CD14-positive monocyte (primary cell): ENCODE measurements at regions of chr1 and their contacts with region 1.

Region 1: GRCh38 chr1:180863158-180863775 is 49.4 kb upstream of the KIAA1614 start:
- DNase-seq: peak; percentile 7 to 47 (median 26)
- H3K4me3 ChIP-seq: no peak overlapping the region
- H3K4me3 Mint-ChIP-seq: no peak overlapping the region
- H3K27ac ChIP-seq: no peak overlapping the region
- H3K27ac Mint-ChIP-seq: no peak overlapping the region
- H3K4me1 ChIP-seq: peaks cover 2 to 11% of the 10 kb centered on the region in 2 donors
- H3K4me1 Mint-ChIP-seq: peaks cover 11% of the 10 kb centered on the region
- H3K27me3 ChIP-seq: no peaks in the 10 kb centered on the region
- H3K27me3 Mint-ChIP-seq: peaks cover 0 to 2% (median 0%) of the 10 kb centered on the region in 3 donors
- CTCF ChIP-seq: peak; percentile 90

Region 2: GRCh38 chr1:180515864-180516388 is 347.3 kb before region 1 on chr1:
- intact Hi-C with region 1: loop called (anchors 5 kb)
- DNase-seq: peak; percentile 48 to 67 (median 58)
- H3K4me3 ChIP-seq: no peak overlapping the region
- H3K4me3 Mint-ChIP-seq: no peak overlapping the region
- H3K27ac ChIP-seq: no peak overlapping the region
- H3K27ac Mint-ChIP-seq: no peak overlapping the region
- H3K4me1 ChIP-seq: no peaks in the 10 kb centered on the region
- H3K4me1 Mint-ChIP-seq: no peaks in the 10 kb centered on the region
- H3K27me3 ChIP-seq: no peaks in the 10 kb centered on the region
- H3K27me3 Mint-ChIP-seq: peaks cover 0 to 5% (median 4%) of the 10 kb centered on the region in 3 donors
- CTCF ChIP-seq: peak; percentile 87

Region 3: GRCh38 chr1:180521474-180522207 is 341.6 kb before region 1 on chr1:
- intact Hi-C with region 1: loop called (anchors 5 kb)
- DNase-seq: no peak
- H3K4me3 ChIP-seq: no peak overlapping the region
- H3K4me3 Mint-ChIP-seq: no peak overlapping the region
- H3K27ac ChIP-seq: no peak overlapping the region
- H3K27ac Mint-ChIP-seq: no peak overlapping the region
- H3K4me1 ChIP-seq: peaks cover 5 to 8% of the 10 kb centered on the region in 2 donors
- H3K4me1 Mint-ChIP-seq: peaks cover 10% of the 10 kb centered on the region
- H3K27me3 ChIP-seq: no peaks in the 10 kb centered on the region
- H3K27me3 Mint-ChIP-seq: peaks cover 0 to 2% (median 1%) of the 10 kb centered on the region in 3 donors
- CTCF ChIP-seq: no peak

Region 4: GRCh38 chr1:180533266-180533987 is 329.8 kb before region 1 on chr1:
- intact Hi-C with region 1: loop called in 1 of 2 experiments (anchors 5 kb)
- DNase-seq: peak; percentile 42 to 49 (median 47)
- H3K4me3 ChIP-seq: no peak overlapping the region
- H3K4me3 Mint-ChIP-seq: no peak overlapping the region
- H3K27ac ChIP-seq: no peak overlapping the region
- H3K27ac Mint-ChIP-seq: no peak overlapping the region
- H3K4me1 ChIP-seq: no peaks in the 10 kb centered on the region
- H3K4me1 Mint-ChIP-seq: no peaks in the 10 kb centered on the region
- H3K27me3 ChIP-seq: no peaks in the 10 kb centered on the region
- H3K27me3 Mint-ChIP-seq: peaks cover 0 to 4% (median 0%) of the 10 kb centered on the region in 3 donors
- CTCF ChIP-seq: peak; percentile 80

Region 5: GRCh38 chr1:180751921-180752320 is 111.3 kb before region 1 on chr1:
- intact Hi-C with region 1: no loop called
- DNase-seq: no peak
- H3K4me3 ChIP-seq: no peak overlapping the region
- H3K4me3 Mint-ChIP-seq: no peak overlapping the region
- H3K27ac ChIP-seq: no peak overlapping the region
- H3K27ac Mint-ChIP-seq: no peak overlapping the region
- H3K4me1 ChIP-seq: no peaks in the 10 kb centered on the region
- H3K4me1 Mint-ChIP-seq: no peaks in the 10 kb centered on the region
- H3K27me3 ChIP-seq: no peaks in the 10 kb centered on the region
- H3K27me3 Mint-ChIP-seq: no peaks in the 10 kb centered on the region
- CTCF ChIP-seq: no peak